ENCODE measurements at regions of chr6 and their contacts with region 1.

Region 1: GRCh38 chr6:28252009-28252975 is at the start of gene ZKSCAN4:
- DNase-seq: peak; percentile 90
- H3K4me3 ChIP-seq: peak within 1 kb of the TSS; percentile 93 to 97
- H3K27ac ChIP-seq: peak within 1 kb of the TSS; percentile 41 to 81; a peak in 3 of 4 replicates
- H3K4me1 ChIP-seq: peaks cover 5 to 12% of the 10 kb centered on the region in 2 experiments; a peak in 3 of 4 replicates
- H3K27me3 ChIP-seq: no peaks in the 10 kb centered on the region
- CTCF ChIP-seq: no peak
- EP300 ChIP-seq: no peak
- RAD21 ChIP-seq: no peak
- polyA plus RNA-seq, gene ZKSCAN4: 2.9 and 3.5 TPM in 2 replicates

Region 2: GRCh38 chr6:28266962-28267694 is 14.8 kb after region 1 on chr6 and contains the start of gene ZSCAN26:
- CTCF ChIA-PET with region 1: interaction called, 4 read pairs
- POLR2A ChIA-PET with region 1: interaction called, 29 read pairs
- DNase-seq: peak; percentile 85
- H3K4me3 ChIP-seq: peak within 1 kb of the TSS; percentile 76 to 85
- H3K27ac ChIP-seq: peak within 1 kb of the TSS; percentile 71 to 96
- H3K4me1 ChIP-seq: peaks cover 0 to 10% of the 10 kb centered on the region in 2 experiments; a peak in 3 of 4 replicates
- H3K27me3 ChIP-seq: no peaks in the 10 kb centered on the region
- CTCF ChIP-seq: no peak
- EP300 ChIP-seq: no peak
- RAD21 ChIP-seq: no peak
- polyA plus RNA-seq, gene ZSCAN26: 11.0 and 14.0 TPM in 2 replicates

Measured in SK-N-SH (cell line).